Activated T-helper 1 cell treated with anti-CD3 and anti-CD28 coated beads, Interleukin-12 subunit alpha, Interleukin-12 subunit beta, Interleukin-2, Interleukin-4 antibody, amounts not matched to agents 30 ng/mL and 10 ng/mL and 1 ng/mL, durations not matched to agents 14 hours and 24 hours and 36 hours (primary cell): ENCODE measurements at regions of chr10 and their contacts with region 1.

Region 1: GRCh38 chr10:68331455-68332258 is at the start of gene HNRNPH3:
- DNase-seq: peak; percentile 99
- H3K4me3 Mint-ChIP-seq: peak within 1 kb of the TSS; percentile 100
- H3K27ac Mint-ChIP-seq: peak within 1 kb of the TSS; percentile 99
- H3K4me1 Mint-ChIP-seq: peaks cover 66% of the 10 kb centered on the region
- H3K27me3 Mint-ChIP-seq: peaks cover 1% of the 10 kb centered on the region
- total RNA-seq, gene HNRNPH3: 176 and 184 TPM in 2 replicates

Region 2: DNA sequence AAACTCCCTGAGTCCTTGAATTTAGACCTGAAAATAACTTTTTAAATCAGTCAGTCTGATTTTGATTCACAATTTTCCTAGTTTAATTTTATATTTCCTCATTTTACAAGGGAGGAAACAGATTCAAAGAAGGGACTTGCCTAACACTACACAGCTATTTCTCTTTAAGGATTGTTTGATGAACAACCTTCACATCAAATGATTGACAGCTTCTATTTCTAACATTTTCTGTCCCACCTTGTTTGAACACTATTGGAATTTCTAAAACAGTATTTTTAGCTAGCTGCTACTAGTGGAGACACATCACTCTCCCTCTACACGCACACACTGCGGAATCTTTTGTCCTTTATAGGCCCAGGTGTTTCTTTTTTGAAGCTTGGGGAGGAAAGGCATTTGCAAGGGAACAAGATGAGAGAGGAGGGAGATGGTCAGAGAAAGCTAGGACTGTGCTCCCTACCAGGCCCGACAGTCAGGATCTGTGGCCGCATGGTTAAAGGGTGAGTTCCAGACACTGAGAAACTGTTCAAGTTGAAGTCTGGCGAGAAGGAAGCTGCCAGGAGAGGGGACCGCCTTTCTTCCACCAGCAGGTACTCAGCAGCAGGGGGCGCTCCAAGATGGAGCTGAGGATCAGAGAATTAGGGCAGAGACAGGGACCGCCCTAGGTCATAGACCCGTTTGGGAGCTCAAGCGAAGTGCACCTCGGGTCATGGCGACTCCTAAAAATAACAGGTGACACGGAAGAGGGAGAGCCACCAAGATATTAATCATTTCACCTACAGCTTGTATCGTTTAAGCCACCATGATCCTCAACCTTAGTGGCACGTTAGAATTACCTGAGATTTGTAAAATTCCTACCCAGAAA is 543.4 kb before region 1 on chr10:
- intact Hi-C with region 1: loop called (anchors 1 kb)
- DNase-seq: peak; percentile 65
- H3K4me3 Mint-ChIP-seq: peak overlapping the region; percentile 70
- H3K27ac Mint-ChIP-seq: peak overlapping the region; percentile 89
- H3K4me1 Mint-ChIP-seq: peaks cover 53% of the 10 kb centered on the region
- H3K27me3 Mint-ChIP-seq: no peaks in the 10 kb centered on the region

Region 3: DNA sequence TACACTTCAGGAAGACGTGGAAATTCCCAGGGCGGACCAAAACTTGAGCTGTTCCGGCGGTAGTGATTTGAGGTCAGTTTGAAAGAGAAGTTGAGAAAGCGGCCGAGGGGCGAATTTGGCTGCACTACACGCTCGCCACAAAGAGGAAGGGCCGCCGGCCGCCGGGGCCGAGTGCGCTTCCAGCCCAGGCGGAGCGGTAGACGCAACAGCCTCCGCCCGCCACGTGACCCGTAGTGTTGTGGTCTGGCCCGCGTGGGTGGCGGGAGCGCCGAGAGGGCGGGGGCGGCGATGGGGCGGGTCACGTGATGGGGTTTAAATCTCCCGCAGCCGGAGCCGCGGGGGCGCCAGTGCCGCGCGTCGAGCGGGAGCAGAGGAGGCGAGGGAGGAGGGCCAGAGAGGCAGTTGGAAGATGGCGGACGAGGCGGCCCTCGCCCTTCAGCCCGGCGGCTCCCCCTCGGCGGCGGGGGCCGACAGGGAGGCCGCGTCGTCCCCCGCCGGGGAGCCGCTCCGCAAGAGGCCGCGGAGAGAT is 447.3 kb before region 1 on chr10 and contains the start of gene SIRT1:
- intact Hi-C with region 1: loop called (anchors 2 kb)
- DNase-seq: peak; percentile 91
- H3K4me3 Mint-ChIP-seq: peak within 1 kb of the TSS; percentile 91
- H3K27ac Mint-ChIP-seq: peak within 1 kb of the TSS; percentile 87
- H3K4me1 Mint-ChIP-seq: peaks cover 28% of the 10 kb centered on the region
- H3K27me3 Mint-ChIP-seq: peaks cover 4% of the 10 kb centered on the region
- total RNA-seq, gene SIRT1: 27.4 and 29.3 TPM in 2 replicates

Region 4: GRCh38 chr10:68231106-68231816 is 100.4 kb before region 1 on chr10:
- intact Hi-C with region 1: loop called (anchors 5 kb)
- DNase-seq: peak; percentile 10
- H3K4me3 Mint-ChIP-seq: peak overlapping the region; percentile 83
- H3K27ac Mint-ChIP-seq: no peak overlapping the region
- H3K4me1 Mint-ChIP-seq: peaks cover 8% of the 10 kb centered on the region
- H3K27me3 Mint-ChIP-seq: peaks cover 55% of the 10 kb centered on the region

Region 5: DNA sequence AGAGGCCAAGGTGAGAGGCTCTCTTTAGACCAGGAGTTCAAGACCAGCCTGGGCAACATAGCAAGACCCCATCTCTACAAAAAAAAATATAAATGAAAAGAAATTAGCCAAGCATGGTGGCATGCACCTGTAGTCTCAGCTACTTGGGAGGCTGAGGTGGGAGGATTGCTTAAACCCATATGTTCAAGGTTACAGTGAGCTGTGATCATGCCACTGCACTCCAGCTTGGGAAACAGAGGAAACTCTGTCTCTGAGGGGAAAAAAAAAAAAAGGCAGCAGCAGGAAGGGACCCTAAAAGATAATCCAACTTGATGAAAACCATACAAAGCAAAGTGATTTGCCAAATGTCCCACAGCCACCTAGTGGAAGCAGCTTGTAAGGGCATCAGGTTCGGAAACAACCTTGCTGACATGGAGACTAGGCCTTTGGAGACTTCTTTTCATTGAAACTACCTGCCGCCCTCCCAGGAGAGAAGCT is 16.6 kb after region 1 on chr10:
- intact Hi-C with region 1: loop called (anchors 2 kb)
- DNase-seq: peak; percentile 10
- H3K4me3 Mint-ChIP-seq: no peak overlapping the region
- H3K27ac Mint-ChIP-seq: peak overlapping the region; percentile 13
- H3K4me1 Mint-ChIP-seq: peaks cover 17% of the 10 kb centered on the region
- H3K27me3 Mint-ChIP-seq: no peaks in the 10 kb centered on the region

Region 6: GRCh38 chr10:68471586-68472408 is 140.1 kb after region 1 on chr10 and contains the start of gene DNA2:
- intact Hi-C with region 1: loop called (anchors 2 kb)
- DNase-seq: peak; percentile 71
- H3K4me3 Mint-ChIP-seq: peak within 1 kb of the TSS; percentile 96
- H3K27ac Mint-ChIP-seq: peak within 1 kb of the TSS; percentile 95
- H3K4me1 Mint-ChIP-seq: peaks cover 25% of the 10 kb centered on the region
- H3K27me3 Mint-ChIP-seq: no peaks in the 10 kb centered on the region
- total RNA-seq, gene DNA2: 50.2 and 54.3 TPM in 2 replicates

Region 7: GRCh38 chr10:68720793-68721672 is 389.4 kb after region 1 on chr10 and contains the start of gene CCAR1:
- intact Hi-C with region 1: loop called (anchors 1 kb)
- DNase-seq: peak; percentile 95
- H3K4me3 Mint-ChIP-seq: peak within 1 kb of the TSS; percentile 90
- H3K27ac Mint-ChIP-seq: peak within 1 kb of the TSS; percentile 98
- H3K4me1 Mint-ChIP-seq: peaks cover 14% of the 10 kb centered on the region
- H3K27me3 Mint-ChIP-seq: peaks cover 2% of the 10 kb centered on the region
- total RNA-seq, gene CCAR1: 102 and 106 TPM in 2 replicates